Breast epithelium (tissue), 4 donors: ENCODE measurements at regions of chr5 and their contacts with region 1.

Region 1: DNA sequence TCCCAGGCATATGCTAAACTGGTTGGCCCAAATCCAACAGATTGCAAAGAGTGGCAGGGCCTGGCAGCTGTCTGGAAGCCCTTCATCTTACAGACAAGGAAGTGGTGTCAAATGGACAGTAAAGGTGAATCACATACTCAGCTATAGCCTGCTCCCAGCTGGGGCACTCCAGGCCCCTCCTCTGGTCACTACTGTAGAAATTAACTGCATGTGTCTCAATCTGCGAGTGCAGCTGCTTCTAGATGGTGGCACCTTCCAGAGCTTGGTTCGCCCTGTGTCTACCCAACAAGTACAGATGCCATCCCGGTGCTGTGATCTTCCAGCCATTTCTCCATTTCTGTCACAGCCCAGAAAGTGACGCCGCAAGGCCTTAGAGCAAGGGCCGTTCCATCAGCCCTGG is 50.2 kb downstream of the OTULIN start:
- DNase-seq: no peak
- H3K4me3 ChIP-seq: no peak overlapping the region
- H3K27ac ChIP-seq: no peak overlapping the region
- H3K4me1 ChIP-seq: no peaks in the 10 kb centered on the region
- H3K27me3 ChIP-seq: no peaks in the 10 kb centered on the region
- CTCF ChIP-seq: no peak
- POLR2A ChIP-seq: no peak

Region 2: DNA sequence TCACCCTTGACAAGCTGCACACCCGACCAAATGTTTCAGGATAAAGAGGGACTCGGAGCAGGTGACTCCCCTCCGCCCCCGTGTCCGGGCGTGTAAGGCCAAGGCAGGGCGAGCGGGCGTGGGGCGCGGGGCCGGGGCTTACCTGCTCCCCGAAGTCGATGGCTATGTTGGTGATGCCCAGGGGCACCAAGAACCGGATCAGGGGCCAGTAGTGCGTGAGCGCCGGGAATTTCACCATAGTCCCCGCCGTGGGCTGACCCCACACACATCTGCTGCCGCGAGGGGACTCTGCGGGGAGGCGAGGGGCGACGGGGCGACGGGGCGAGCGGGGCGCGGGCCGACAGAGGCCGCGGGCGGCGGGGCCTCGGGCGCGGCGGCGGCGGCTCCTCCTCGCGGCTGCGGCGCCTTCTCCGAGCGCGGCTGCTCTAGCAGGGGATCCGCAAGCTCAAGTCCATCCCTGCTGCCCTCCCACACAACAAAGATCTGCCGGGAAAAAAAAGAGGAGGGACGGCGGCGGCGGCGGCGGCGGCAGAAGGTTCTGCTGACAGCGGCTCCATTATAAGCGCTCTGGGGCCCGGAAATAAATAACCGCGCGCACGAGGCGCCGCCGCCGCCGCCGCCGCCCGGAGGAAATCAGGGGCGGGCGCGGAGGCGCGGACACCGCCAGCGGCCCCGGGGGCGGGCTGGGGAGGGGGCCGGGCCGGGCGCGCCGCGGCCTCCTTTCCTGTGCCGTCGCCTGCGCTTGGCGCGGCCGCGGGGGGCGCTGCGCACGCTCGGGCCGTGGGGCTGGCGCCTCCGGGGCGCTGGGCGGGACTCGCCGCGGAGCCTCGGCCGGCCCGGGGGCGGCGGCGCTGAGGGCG is 156.7 kb after region 1 on chr5 and contains the start of gene ANKH:
- intact Hi-C with region 1: loop called (anchors 10 kb)
- DNase-seq: peak; percentile 60 to 62
- H3K4me3 ChIP-seq: peak within 1 kb of the TSS; percentile 80 to 91 (median 80)
- H3K27ac ChIP-seq: peak within 1 kb of the TSS; percentile 95 to 99
- H3K4me1 ChIP-seq: no peaks in the 10 kb centered on the region
- H3K27me3 ChIP-seq: no peaks in the 10 kb centered on the region
- CTCF ChIP-seq: peak in 1 of 3 donors; percentile 34
- POLR2A ChIP-seq: no peak
- total RNA-seq, gene ANKH: 31.5 to 83.1 (median 52.1) TPM